ENCODE measurements at regions of chr1 and their contacts with region 1.

Region 1: GRCh38 chr1:29181413-29182225 is at the start of gene SRSF4:
- DNase-seq: peak; percentile 99
- H3K4me3 Mint-ChIP-seq: peak within 1 kb of the TSS; percentile 97
- H3K27ac Mint-ChIP-seq: peak within 1 kb of the TSS; percentile 92
- H3K4me1 Mint-ChIP-seq: peaks cover 53% of the 10 kb centered on the region
- H3K27me3 Mint-ChIP-seq: no peaks in the 10 kb centered on the region
- total RNA-seq, gene SRSF4: 129 and 135 TPM in 2 replicates

Region 2: DNA sequence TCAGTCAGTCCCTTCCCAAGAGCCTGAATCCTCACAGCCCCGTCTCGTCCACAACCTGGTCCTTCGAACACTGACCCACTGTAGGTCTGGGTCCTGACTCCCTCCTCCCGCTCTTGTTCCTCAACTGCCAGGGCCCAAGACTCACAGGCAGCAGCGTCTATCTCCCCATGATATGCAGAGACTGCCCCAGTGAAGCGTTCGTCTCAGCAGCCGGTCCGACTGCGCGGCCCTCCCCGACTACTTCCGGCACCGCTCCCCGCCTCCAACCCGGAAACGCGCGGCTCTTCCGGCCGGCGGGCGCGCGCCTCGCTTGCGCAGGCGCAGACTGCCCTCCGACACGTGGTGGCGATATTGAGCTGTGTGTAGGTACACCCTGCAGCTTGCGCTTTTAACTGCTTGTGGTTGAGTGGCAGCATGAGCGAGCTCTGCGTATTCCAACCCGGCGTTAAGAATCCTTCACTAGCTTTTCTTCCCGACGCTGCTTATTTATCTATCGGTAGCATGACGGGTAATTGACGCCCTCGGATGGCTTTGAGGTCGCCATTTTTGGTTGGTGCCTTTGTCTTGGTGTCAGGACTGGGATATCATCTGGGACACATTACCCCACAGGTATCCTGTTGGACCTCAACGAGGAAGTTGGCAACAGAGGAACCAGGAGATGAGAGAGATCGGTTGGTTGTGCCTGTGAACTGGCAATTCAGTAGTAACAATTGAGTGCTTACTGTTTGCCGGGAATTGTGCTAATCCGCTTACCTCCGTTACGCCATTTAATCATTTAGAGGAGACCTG is 538.6 kb before region 1 on chr1 and contains the start of gene TAF12:
- intact Hi-C with region 1: loop called (anchors 1 kb)
- DNase-seq: peak; percentile 85
- H3K4me3 Mint-ChIP-seq: peak within 1 kb of the TSS; percentile 99
- H3K27ac Mint-ChIP-seq: peak within 1 kb of the TSS; percentile 99
- H3K4me1 Mint-ChIP-seq: peaks cover 55% of the 10 kb centered on the region
- H3K27me3 Mint-ChIP-seq: no peaks in the 10 kb centered on the region
- total RNA-seq, gene TAF12: 32.8 and 33.9 TPM in 2 replicates

Region 3: DNA sequence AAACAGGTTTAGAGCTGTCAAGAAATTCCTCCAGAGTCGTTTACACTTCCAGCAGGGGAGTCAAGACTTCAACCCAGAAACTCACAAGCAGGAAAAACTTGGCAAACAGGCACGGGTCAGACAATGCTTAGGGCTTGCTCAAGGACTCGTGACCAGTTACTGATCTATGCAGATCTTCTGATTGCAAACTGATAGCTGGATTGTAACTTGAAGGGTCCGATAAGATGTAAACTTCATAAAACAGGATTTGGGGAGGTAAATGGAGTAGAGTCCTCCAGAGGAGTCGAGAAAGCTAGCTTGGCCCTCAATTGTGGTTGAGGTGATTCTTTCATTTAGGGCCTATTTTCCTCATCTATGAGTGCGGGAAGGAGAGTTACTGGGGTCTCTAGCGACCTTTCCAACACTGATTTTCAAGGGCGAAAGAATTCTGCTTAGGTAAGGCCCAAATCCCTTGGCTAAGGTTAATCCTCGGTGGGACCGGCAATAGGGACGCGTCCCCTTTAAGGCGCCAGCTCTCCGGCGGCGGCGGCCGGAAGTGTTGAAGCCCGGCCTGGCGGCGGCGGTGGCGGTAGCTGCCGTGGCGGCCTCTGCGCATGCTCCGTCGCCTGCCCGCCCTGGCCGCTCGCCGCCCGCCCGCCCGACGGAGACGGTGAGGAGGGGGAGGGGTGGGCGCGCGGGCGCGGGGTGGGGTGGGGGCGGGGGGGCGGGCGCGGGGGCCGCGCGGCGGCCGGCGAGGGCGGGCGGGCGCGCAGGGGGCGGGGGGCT is 513.2 kb before region 1 on chr1 and contains the start of gene GMEB1:
- intact Hi-C with region 1: loop called (anchors 2 kb)
- DNase-seq: peak; percentile 87
- H3K4me3 Mint-ChIP-seq: peak within 1 kb of the TSS; percentile 90
- H3K27ac Mint-ChIP-seq: peak within 1 kb of the TSS; percentile 98
- H3K4me1 Mint-ChIP-seq: peaks cover 11% of the 10 kb centered on the region
- H3K27me3 Mint-ChIP-seq: no peaks in the 10 kb centered on the region
- total RNA-seq, gene GMEB1: 27.2 and 30.3 TPM in 2 replicates

Region 4: DNA sequence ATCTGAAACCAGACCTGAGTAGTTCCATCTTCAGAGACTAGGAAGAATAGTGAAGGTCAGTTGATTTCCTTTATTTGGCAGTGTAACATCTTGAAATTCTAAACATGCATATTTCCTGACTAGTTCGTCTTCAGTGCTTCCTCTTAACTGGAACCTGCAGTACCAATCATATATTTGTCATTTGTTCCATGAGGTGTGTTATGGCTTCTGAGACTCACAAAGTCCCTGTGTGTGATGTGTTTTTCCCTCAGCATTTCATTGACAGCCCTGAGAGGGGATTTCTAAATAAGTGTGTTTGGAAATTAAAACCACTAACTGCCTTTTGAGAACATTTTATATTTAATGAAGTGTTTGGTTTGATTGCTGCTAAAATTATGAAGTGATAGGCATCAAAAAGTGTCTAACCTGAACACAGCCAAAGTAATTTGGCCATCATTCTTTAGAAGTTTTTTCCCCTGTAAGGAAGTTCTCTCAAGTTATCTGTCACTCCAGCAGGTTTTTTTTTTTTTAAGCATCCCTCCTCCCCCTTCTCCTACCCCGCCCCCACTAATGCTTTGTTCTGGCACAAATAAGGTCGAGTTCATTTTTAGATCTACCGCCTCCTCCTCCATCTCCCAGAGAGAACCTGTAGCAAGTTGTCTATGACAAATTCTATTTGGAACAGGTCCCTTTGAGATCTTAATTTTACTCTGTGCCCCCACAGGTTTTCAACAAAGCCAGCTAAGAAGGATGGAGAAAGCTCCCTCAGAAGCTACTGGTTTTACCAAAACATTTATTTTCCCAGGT is 119.3 kb before region 1 on chr1:
- intact Hi-C with region 1: loop called (anchors 5 kb)
- DNase-seq: no peak
- H3K4me3 Mint-ChIP-seq: peak overlapping the region; percentile 46
- H3K27ac Mint-ChIP-seq: peak overlapping the region; percentile 97
- H3K4me1 Mint-ChIP-seq: peaks cover 23% of the 10 kb centered on the region
- H3K27me3 Mint-ChIP-seq: no peaks in the 10 kb centered on the region

Region 5: GRCh38 chr1:29202584-29203340 is 21.1 kb after region 1 on chr1:
- intact Hi-C with region 1: loop called (anchors 1 kb)
- DNase-seq: peak; percentile 78
- H3K4me3 Mint-ChIP-seq: no peak overlapping the region
- H3K27ac Mint-ChIP-seq: no peak overlapping the region
- H3K4me1 Mint-ChIP-seq: peaks cover 11% of the 10 kb centered on the region
- H3K27me3 Mint-ChIP-seq: no peaks in the 10 kb centered on the region

Region 6: GRCh38 chr1:30302858-30303786 is 1121.5 kb after region 1 on chr1:
- intact Hi-C with region 1: no loop called
- DNase-seq: no peak
- H3K4me3 Mint-ChIP-seq: no peak overlapping the region
- H3K27ac Mint-ChIP-seq: no peak overlapping the region
- H3K4me1 Mint-ChIP-seq: no peaks in the 10 kb centered on the region
- H3K27me3 Mint-ChIP-seq: peaks cover 8% of the 10 kb centered on the region

Region 7: DNA sequence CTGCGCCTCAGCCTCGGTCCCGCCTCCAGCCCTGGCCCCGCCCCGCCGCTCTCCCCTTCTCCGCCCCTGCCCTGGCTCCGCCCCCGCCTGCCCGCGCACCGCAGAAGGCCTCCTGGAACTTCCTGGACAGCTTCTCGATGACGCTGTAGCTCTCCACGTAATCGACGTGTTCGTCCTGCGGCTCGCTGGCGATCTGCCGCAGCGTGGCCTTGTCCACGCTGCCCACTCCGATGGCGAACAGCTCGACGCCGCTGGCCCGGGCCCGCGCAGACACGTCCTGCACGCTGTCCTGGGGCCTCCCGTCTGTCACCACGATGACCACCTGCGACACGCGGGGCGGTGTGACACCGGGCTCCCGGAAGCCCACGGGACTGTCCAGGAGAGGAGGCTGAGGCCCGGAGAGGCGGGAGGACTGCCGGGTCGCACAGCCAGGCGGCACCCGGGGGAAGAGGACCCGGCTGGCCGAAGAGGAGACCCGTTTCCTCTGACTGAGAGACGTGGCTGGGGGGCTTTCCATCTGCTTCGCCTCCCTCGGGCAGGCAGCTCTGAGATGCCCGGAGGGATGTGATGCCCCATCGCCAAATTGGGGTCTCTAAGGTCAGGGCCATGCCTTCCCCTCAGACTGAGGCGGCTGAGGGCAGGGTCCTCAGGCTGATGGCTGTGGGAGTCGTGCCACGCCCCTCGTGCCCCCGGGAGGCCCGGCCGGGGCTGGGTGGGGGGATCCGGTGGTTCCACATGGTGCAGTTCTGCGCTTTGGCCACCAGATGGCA is 1537.2 kb after region 1 on chr1:
- intact Hi-C with region 1: loop called (anchors 1 kb)
- DNase-seq: peak; percentile 95
- H3K4me3 Mint-ChIP-seq: peak overlapping the region; percentile 89
- H3K27ac Mint-ChIP-seq: peak overlapping the region; percentile 93
- H3K4me1 Mint-ChIP-seq: peaks cover 20% of the 10 kb centered on the region
- H3K27me3 Mint-ChIP-seq: peaks cover 3% of the 10 kb centered on the region